Sigmoid colon (tissue), 7 donors: ENCODE measurements at regions of chr1 and their contacts with region 1.

Region 1: DNA sequence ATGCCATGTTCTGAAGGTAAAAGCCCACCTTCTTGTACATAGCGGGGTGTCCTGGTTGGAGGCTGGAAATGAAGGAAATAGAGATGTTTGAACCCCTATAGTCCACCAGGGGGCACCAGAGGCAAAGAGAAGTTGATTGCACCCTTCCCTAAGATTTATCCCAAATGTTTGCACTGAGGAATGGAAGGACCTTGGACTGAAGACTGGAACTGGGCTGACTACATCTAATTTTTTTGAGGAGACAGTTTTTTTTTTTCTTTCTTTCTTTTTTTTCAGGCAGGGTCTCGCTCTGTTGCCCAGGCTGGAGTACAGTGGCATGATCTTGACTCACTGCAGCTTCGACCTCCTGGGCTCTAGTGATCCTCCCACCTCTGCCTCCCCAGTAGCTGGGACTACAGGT is 55.3 kb upstream of the EIF4G3 start:
- DNase-seq: no peak
- H3K4me3 ChIP-seq: no peak overlapping the region
- H3K27ac ChIP-seq: no peak overlapping the region
- H3K4me1 ChIP-seq: no peaks in the 10 kb centered on the region
- H3K27me3 ChIP-seq: no peaks in the 10 kb centered on the region
- CTCF ChIP-seq: peak; percentile 55 to 74 (median 72)
- EP300 ChIP-seq: no peak
- POLR2A ChIP-seq: no peak

Region 2: DNA sequence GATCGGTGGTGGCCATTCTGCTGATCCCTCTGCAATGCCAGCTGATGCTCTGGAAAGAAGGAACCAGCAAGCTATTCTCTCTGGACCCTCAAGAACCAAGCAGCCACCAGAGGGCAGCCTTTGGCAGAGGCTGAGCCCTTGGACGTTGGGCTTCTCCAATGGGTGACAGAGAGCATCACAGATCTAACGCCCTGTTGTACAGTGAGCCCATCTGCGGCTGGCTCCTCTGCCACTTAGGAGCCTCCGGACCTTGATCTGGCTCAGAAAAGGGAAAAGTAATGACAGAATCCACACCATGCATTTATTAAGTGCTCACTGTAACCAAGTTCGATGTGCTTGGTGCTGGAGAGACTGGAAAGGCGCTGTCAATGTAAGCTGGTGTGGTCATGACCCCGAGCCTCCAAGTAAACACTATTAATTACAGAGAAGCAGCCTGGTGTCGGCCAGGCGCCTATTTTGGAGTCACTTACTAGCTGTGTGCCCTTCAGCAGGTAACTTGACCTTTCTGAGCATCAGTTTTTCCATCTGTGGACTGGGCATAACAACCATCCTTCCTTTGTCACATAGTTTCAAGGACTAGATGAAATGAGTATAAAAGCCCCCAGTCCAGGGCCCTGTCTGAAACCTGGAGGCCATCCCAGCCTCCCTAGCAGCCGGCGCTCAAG is 23.4 kb after region 1 on chr1:
- intact Hi-C with region 1: loop called (anchors 2 kb)
- DNase-seq: peak; percentile 93
- H3K4me3 ChIP-seq: no peak overlapping the region
- H3K27ac ChIP-seq: peak overlapping the region; percentile 49 to 57 (median 54)
- H3K4me1 ChIP-seq: peaks cover 0 to 27% (median 26%) of the 10 kb centered on the region in 4 donors
- H3K27me3 ChIP-seq: no peaks in the 10 kb centered on the region
- CTCF ChIP-seq: peak; percentile 79 to 93 (median 84)
- EP300 ChIP-seq: no peak
- POLR2A ChIP-seq: no peak

Region 3: DNA sequence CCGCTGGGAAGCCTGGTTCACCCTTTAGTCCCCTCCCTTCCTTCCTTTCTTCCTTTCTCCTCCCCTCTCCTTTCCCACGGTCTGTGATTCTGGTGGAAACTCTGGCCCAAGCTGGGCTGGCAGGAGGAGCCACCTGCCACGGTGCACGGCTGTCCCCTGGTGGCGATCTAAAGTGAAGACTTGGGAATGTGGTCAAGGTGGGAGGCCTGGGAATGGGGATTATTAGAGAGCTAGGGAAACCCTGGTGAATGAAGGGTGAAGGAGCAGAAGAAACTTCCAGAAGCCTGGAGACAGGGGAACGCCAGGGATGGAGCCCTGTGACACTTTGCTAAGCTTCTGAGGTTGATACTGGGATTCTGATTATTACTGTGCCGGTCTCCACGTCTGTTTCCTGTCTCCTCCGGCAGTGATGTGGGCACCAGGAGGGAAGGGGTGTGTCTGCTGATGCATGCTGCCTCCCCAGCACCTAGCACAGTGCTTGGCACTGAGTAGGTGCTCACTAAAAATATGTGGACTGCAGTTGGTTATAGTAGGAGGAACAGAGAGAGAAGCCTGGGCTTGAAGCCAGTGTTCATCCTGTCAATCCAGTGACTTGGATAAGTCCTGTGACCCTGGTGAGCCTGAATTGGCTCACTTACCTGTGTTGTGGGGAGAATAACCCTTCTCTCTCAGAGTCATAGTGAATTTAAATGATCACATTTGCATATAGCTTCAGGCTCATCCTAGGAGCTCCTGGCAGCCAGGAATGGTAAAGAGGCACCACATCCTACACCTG is 136.7 kb after region 1 on chr1:
- intact Hi-C with region 1: loop called (anchors 1 kb)
- DNase-seq: peak; percentile 92
- H3K4me3 ChIP-seq: no peak overlapping the region
- H3K27ac ChIP-seq: no peak overlapping the region
- H3K4me1 ChIP-seq: peaks cover 0 to 3% (median 0%) of the 10 kb centered on the region in 4 donors
- H3K27me3 ChIP-seq: no peaks in the 10 kb centered on the region
- CTCF ChIP-seq: peak; percentile 99 to 100 (median 100)
- EP300 ChIP-seq: no peak
- POLR2A ChIP-seq: no peak

Region 4: GRCh38 chr1:21435646-21436487 is 203.8 kb after region 1 on chr1:
- intact Hi-C with region 1: loop called (anchors 2 kb)
- DNase-seq: no peak
- H3K4me3 ChIP-seq: peak overlapping the region in 2 of 4 donors; percentile 44
- H3K27ac ChIP-seq: no peak overlapping the region
- H3K4me1 ChIP-seq: peaks cover 0 to 16% (median 9%) of the 10 kb centered on the region in 4 donors
- H3K27me3 ChIP-seq: peaks cover 6 to 19% (median 9%) of the 10 kb centered on the region in 3 donors
- CTCF ChIP-seq: no peak
- EP300 ChIP-seq: no peak
- POLR2A ChIP-seq: no peak